Panc1 (cell line): ENCODE measurements at regions of chr10 and their contacts with region 1.

Region 1: GRCh38 chr10:102534333-102534732 is 30.6 kb downstream of the SUFU start:
- DNase-seq: no peak
- ATAC-seq: no peak
- H3K4me3 ChIP-seq: no peak overlapping the region
- H3K27ac ChIP-seq: no peak overlapping the region
- H3K4me1 ChIP-seq: no peaks in the 10 kb centered on the region
- H3K27me3 ChIP-seq: no peaks in the 10 kb centered on the region
- CTCF ChIP-seq: no peak

Region 2: DNA sequence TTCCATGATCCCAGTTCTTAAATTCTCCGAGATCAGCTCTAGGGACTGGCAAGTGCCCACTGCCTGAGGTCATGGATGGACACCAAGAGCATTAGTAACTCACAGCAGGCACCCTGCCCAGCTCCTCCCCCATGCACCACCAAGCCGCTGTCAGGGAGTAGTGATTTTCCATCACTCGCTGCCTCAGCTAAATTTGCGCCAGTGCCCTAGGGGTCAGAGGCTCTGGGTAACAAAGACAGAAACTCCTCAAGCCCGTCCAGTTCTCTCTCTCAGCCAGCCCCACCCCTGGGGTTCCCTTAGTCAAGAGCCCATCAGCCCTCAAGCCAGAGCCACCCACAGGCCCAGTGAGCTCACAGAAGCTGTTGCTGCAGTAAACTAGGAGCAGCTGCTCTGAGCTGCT is 1758.9 kb before region 1 on chr10:
- CTCF ChIA-PET with region 1: no interaction called
- POLR2A ChIA-PET with region 1: interaction called, 11 read pairs
- in situ Hi-C with region 1: no loop called
- intact Hi-C with region 1: no loop called
- DNase-seq: no peak
- ATAC-seq: peak; percentile 77
- H3K4me3 ChIP-seq: no peak overlapping the region
- H3K27ac ChIP-seq: 0 out of 2 replicates have a peak overlapping the region, but pooled peaks have one; percentile 18
- H3K4me1 ChIP-seq: peaks cover 10% of the 10 kb centered on the region
- H3K27me3 ChIP-seq: no peaks in the 10 kb centered on the region
- CTCF ChIP-seq: no peak

Region 3: DNA sequence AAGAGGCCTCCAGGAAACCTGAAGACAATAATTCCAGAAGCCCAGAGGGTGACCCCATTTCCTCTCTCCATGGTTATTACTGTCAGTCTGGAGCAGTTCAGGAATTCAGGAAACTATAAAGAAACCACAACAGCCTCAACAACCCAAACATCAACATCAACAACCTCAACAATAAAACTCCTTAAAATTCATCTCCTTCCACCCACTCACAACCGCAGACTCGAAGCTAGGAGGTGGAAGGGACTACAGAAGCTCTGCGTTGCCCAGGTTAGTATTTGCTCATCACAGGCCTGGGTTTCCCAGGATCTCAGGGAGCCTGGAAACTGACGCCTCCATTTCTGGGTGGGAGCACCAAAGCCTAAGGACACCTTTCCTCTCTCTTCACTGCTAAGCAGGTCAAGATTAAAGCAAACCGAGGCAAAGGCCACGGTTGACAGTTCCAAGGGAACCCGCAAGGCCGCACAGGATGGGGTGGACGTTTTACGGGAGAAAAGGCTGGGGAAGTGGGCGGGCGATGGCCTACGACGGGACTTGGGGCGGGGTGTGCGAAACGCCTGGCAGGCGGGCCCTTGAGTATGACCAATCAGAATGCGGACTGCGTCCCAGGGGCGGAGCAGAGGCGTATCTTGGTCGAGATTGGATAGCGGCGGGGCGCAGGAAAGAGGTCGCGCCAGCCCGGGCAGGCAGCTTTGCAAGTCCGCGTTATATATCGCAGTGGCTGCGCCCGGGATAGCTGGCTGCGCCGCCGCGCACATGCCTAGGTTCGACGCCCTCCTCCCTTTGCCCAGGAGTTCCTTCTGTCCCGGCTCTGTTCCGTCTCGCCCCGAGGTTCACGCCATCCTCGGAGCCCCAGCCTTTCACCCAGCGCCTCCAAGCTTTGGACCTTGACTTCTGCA is 308.4 kb before region 1 on chr10 and contains the start of gene ELOVL3:
- CTCF ChIA-PET with region 1: no interaction called
- POLR2A ChIA-PET with region 1: no interaction called
- in situ Hi-C with region 1: no loop called
- intact Hi-C with region 1: no loop called
- DNase-seq: peak; percentile 50
- ATAC-seq: peak; percentile 87
- H3K4me3 ChIP-seq: peak within 1 kb of the TSS; percentile 26 to 61
- H3K27ac ChIP-seq: peak within 1 kb of the TSS; percentile 64
- H3K4me1 ChIP-seq: 0 out of 2 replicates have a peak, but pooled peaks cover 5% of the 10 kb centered on the region
- H3K27me3 ChIP-seq: peaks cover 9% of the 10 kb centered on the region
- CTCF ChIP-seq: no peak
- total RNA-seq, gene ELOVL3: 1.2 TPM

Region 4: GRCh38 chr10:102583435-102584417 is 49.4 kb after region 1 on chr10:
- CTCF ChIA-PET with region 1: no interaction called
- POLR2A ChIA-PET with region 1: no interaction called
- in situ Hi-C with region 1: no loop called
- intact Hi-C with region 1: no loop called
- DNase-seq: peak; percentile 74
- ATAC-seq: peak; percentile 99
- H3K4me3 ChIP-seq: no peak overlapping the region
- H3K27ac ChIP-seq: no peak overlapping the region
- H3K4me1 ChIP-seq: peaks cover 5% of the 10 kb centered on the region; the same call in 1 of the 2 replicates
- H3K27me3 ChIP-seq: no peaks in the 10 kb centered on the region
- CTCF ChIP-seq: peak; percentile 94

Region 5: GRCh38 chr10:102713814-102714620 is 179.7 kb after region 1 on chr10 and contains the start of gene ARL3:
- CTCF ChIA-PET with region 1: no interaction called
- POLR2A ChIA-PET with region 1: no interaction called
- in situ Hi-C with region 1: no loop called
- intact Hi-C with region 1: no loop called
- DNase-seq: peak; percentile 85
- ATAC-seq: peak; percentile 96
- H3K4me3 ChIP-seq: peak within 1 kb of the TSS; percentile 68 to 82
- H3K27ac ChIP-seq: peak within 1 kb of the TSS; percentile 93
- H3K4me1 ChIP-seq: peaks cover 37% of the 10 kb centered on the region
- H3K27me3 ChIP-seq: no peaks in the 10 kb centered on the region
- CTCF ChIP-seq: no peak; the same call in 1 of the 2 replicates
- total RNA-seq, gene ARL3: 20.7 TPM